ENCODE measurements at regions of chr1 and their contacts with region 1.

Region 1: GRCh38 chr1:59699227-59699847 is 115.4 kb upstream of the HOOK1 start:
- H3K4me3 ChIP-seq: no peak overlapping the region
- H3K27ac ChIP-seq: no peak overlapping the region
- H3K4me1 ChIP-seq: no peaks in the 10 kb centered on the region
- CTCF ChIP-seq: peak; percentile 52; the same call in 1 of the 2 replicates

Region 2: GRCh38 chr1:58739856-58740466 is 959.4 kb before region 1 on chr1:
- CTCF ChIA-PET with region 1: interaction called, 18 read pairs
- POLR2A ChIA-PET with region 1: no interaction called
- H3K4me3 ChIP-seq: no peak overlapping the region
- H3K27ac ChIP-seq: no peak overlapping the region
- H3K4me1 ChIP-seq: peaks cover 5% of the 10 kb centered on the region; the same call in 1 of the 2 replicates
- CTCF ChIP-seq: peak; percentile 39; the same call in 1 of the 2 replicates

Region 3: DNA sequence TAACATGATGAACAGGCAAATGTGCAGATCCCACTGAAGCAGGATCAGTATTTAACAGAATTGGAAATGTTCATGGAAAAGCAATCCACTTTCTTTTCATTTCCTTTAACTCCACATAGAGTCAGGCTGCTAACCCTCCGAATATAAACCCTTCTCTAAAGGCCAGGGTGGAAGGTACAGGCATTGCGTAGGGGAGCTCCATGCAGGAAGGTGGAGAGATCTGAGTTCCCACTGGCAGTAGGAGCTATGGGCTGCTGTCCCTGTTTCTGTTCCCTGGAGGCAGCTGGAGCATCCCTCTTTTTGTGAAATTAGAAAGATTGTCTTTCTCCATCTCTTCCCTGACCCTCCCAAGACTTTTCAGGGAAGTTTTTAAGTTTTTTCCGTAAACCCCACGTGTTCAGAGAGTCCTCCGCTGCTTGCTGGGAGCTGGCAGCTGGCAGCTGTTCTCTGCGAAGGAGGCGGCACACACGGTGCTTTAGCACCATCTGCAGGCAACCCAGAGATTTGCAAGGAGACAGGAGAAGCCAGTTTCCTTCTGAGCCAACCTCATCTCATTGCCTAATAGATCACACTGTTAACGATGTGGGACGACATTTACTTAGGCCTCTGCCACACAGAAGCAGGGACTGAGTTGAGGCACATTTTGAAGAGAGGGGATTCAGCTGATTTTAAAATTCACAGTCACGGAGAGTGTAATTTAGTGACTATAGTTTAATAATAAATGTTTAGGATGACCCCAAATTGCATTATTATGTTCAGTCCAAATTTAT is 60.0 kb after region 1 on chr1:
- CTCF ChIA-PET with region 1: interaction called, 16 read pairs
- POLR2A ChIA-PET with region 1: no interaction called
- H3K4me3 ChIP-seq: no peak overlapping the region
- H3K27ac ChIP-seq: no peak overlapping the region
- H3K4me1 ChIP-seq: no peaks in the 10 kb centered on the region
- CTCF ChIP-seq: peak; percentile 89

Measured in HEK293 (cell line).